Right lobe of liver (tissue), 6 donors: ENCODE measurements at regions of chr4 and their contacts with region 1.

Region 1: GRCh38 chr4:1222036-1222789 is 26.7 kb downstream of the CTBP1 start:
- DNase-seq: no peak
- ATAC-seq: no peak
- H3K4me3 ChIP-seq: no peak overlapping the region
- H3K27ac ChIP-seq: no peak overlapping the region
- H3K4me1 ChIP-seq: no peaks in the 10 kb centered on the region
- H3K27me3 ChIP-seq: no peaks in the 10 kb centered on the region
- CTCF ChIP-seq: no peak
- POLR2A ChIP-seq: no peak

Region 2: GRCh38 chr4:1026115-1026514 is 196.1 kb before region 1 on chr4:
- intact Hi-C with region 1: loop called in 1 of 2 experiments (anchors 10 kb)
- DNase-seq: peak; percentile 67 to 77 (median 69)
- ATAC-seq: peak; percentile 73 to 87 (median 79)
- H3K4me3 ChIP-seq: no peak overlapping the region
- H3K27ac ChIP-seq: no peak overlapping the region
- H3K4me1 ChIP-seq: no peaks in the 10 kb centered on the region
- H3K27me3 ChIP-seq: no peaks in the 10 kb centered on the region
- CTCF ChIP-seq: no peak
- POLR2A ChIP-seq: no peak